ENCODE measurements at regions of chr1 and their contacts with region 1.

Region 1: GRCh38 chr1:174800216-174800851 is 199.4 kb upstream of the CACYBP start:
- DNase-seq: no peak
- ATAC-seq: no peak
- H3K4me3 ChIP-seq: peak overlapping the region; percentile 70
- H3K27ac ChIP-seq: no peak overlapping the region
- H3K4me1 ChIP-seq: peaks cover 18% of the 10 kb centered on the region
- H3K27me3 ChIP-seq: no peaks in the 10 kb centered on the region
- CTCF ChIP-seq: no peak

Region 2: DNA sequence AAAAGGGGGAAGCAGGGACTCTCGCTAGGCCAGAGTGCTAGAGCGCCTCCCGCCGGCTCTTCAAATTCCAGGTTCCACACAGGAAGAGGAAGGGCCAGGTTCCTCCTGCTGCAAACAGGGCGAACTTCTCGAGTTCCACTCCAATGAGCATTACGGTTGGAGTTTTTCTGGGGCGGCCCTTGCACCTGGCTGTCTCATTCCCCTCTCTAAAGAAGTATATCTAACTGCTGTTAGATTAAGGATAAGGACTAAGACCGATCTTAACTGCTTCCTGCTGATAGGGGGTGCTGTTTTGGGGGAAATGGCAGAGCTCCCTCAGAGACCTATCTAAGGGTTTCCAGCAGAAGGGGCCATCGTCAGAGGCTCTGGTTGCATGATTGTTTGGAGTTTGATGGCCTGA is 503.0 kb before region 1 on chr1:
- CTCF ChIA-PET with region 1: no interaction called
- POLR2A ChIA-PET with region 1: no interaction called
- intact Hi-C with region 1: no loop called
- DNase-seq: no peak
- ATAC-seq: no peak
- H3K4me3 ChIP-seq: no peak overlapping the region
- H3K27ac ChIP-seq: no peak overlapping the region
- H3K4me1 ChIP-seq: no peaks in the 10 kb centered on the region
- H3K27me3 ChIP-seq: no peaks in the 10 kb centered on the region
- CTCF ChIP-seq: no peak; the same call in 1 of the 2 replicates

Region 3: GRCh38 chr1:174689524-174689923 is 110.8 kb before region 1 on chr1:
- CTCF ChIA-PET with region 1: no interaction called
- POLR2A ChIA-PET with region 1: no interaction called
- intact Hi-C with region 1: loop called (anchors 5 kb)
- DNase-seq: no peak
- ATAC-seq: no peak
- H3K4me3 ChIP-seq: no peak overlapping the region
- H3K27ac ChIP-seq: no peak overlapping the region
- H3K4me1 ChIP-seq: no peaks in the 10 kb centered on the region
- H3K27me3 ChIP-seq: no peaks in the 10 kb centered on the region
- CTCF ChIP-seq: no peak

Region 4: GRCh38 chr1:174874331-174875053 is 74.2 kb after region 1 on chr1:
- CTCF ChIA-PET with region 1: no interaction called
- POLR2A ChIA-PET with region 1: no interaction called
- intact Hi-C with region 1: loop called (anchors 10 kb)
- DNase-seq: no peak
- ATAC-seq: no peak
- H3K4me3 ChIP-seq: no peak overlapping the region
- H3K27ac ChIP-seq: no peak overlapping the region
- H3K4me1 ChIP-seq: peaks cover 26% of the 10 kb centered on the region
- H3K27me3 ChIP-seq: no peaks in the 10 kb centered on the region
- CTCF ChIP-seq: no peak

Measured in PC-3 (cell line).